ENCODE measurements at regions of chr5 and their contacts with region 1.

Region 1: DNA sequence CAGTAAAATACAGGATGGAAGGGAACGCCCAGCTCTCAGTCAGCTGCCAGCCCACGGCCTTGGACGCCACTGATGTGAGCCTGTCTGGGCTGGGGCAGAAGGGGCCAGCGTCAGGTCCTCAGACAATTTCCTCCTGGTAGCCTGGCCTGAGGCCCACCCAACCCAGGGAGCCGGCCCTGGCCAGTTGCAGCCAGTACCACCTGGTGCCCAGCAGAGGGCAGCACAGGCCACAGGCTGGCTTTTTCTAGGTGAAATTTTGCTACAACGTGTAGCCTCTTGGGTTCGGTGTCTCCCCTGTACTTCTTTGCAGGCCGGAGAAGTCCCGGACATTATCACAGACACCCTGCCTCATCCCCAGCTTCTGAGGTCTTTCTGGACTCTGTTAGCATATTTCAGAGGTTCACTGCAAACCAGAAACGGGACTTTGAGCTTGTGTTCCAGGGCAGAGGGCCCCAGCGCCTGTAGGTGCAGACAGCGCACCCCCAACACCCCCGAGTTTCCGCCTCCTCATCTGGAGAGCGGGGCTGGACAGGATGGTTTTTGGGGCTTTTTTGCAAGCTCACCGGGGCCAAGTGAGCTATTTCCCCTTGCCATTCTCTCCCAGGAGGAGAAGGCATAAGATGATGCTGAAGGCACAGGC is 45.9 kb upstream of the KCNMB1 start:
- DNase-seq: peak; percentile 55 to 85 (median 68)
- H3K4me3 ChIP-seq: no peak overlapping the region
- H3K27ac ChIP-seq: no peak overlapping the region
- H3K27me3 ChIP-seq: peaks cover 0 to 5% (median 0%) of the 10 kb centered on the region in 45 donors
- CTCF ChIP-seq: peak; percentile 86 to 100 (median 99)

Region 2: DNA sequence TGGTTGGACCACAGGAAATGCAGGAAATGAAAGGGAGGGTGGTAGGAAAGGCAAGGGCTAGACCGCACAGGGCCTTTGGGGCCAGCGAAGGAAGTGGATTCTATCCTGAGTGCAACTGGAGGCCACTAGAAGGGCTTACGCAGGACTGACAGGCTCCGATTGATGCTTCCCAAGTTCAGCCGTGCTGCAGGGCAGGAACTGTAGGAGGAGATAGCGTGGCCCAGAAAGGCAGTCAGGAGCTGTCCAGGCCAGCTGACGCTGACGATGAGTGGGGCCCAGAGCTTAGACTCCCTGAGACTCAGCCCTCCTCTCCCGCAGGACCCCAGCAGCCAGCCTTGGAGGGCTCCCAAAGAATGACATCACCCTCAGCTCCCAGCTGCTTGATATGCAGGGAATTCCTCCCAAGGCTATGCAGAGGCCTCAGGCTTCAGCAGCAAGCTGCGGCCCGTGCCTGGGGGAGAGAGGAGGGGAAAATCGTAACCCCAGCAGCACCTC is 117.6 kb after region 1 on chr5:
- intact Hi-C with region 1: loop called in 1 of 2 experiments (anchors 5 kb)
- DNase-seq: peak; percentile 28 to 84 (median 74)
- H3K4me3 ChIP-seq: peak overlapping the region in 13 of 59 donors; percentile 2 to 35 (median 19)
- H3K27ac ChIP-seq: peak overlapping the region in 57 of 59 donors; percentile 1 to 91 (median 74)
- H3K27me3 ChIP-seq: no peaks in the 10 kb centered on the region
- CTCF ChIP-seq: peak in 2 of 56 donors; percentile 16 to 19

Region 3: GRCh38 chr5:170623576-170624181 is 188.6 kb after region 1 on chr5:
- intact Hi-C with region 1: loop called in 1 of 2 experiments (anchors 1 kb)
- DNase-seq: peak in 7 of 10 donors; percentile 31 to 66 (median 47)
- H3K4me3 ChIP-seq: no peak overlapping the region
- H3K27ac ChIP-seq: no peak overlapping the region
- H3K27me3 ChIP-seq: no peaks in the 10 kb centered on the region
- CTCF ChIP-seq: peak in 53 of 56 donors; percentile 43 to 78 (median 65)

Region 4: DNA sequence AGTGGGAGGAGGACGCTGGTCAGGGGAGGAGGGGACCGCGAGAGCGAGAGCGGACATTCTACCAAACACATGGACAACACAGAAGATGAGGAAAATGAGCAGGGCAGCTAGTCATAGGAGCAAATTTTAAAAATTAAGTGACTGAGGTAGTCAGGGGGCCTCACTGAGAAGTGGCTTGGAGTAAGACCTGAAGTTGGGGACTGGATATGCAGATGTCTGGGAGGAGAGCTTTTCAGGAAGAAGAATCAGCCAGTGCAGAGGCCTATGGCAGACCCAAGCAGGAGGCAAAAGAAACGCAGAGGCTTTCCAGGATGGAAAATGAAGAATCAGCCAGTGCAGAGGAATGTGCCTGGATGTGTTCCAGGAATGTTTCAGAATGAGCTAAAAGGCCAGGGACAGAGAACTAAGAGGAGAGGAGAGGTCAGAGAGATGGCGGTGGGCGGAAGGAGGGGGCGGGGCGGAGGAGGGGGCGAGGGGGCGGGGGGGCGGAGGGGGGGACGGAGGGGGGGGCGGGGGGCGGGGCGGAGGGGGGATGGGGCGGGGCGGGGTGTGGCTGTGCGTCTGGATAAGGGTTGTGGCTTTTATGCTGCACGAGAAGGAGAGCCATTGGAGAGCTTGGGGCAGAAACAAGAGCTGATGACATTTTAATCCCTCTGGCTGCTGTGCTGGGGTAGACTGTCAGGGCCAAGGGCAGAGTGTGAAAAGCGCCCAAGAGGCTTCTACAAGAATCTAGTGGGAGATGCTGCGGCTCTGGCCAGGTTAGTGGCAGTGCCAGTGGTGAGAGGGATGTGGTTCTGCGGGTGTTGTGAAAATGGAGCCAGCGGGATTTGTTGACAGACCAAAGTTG is 198.4 kb after region 1 on chr5:
- intact Hi-C with region 1: loop called (anchors 1 to 2 kb)
- DNase-seq: peak in 1 of 10 donors; percentile 26
- H3K4me3 ChIP-seq: peak overlapping the region in 54 of 59 donors; percentile 0 to 59 (median 36)
- H3K27ac ChIP-seq: peak overlapping the region in 42 of 59 donors; percentile 5 to 81 (median 51)
- H3K27me3 ChIP-seq: peaks cover 0 to 4% (median 0%) of the 10 kb centered on the region in 45 donors
- CTCF ChIP-seq: peak in 29 of 56 donors; percentile 1 to 99 (median 23)

Region 5: GRCh38 chr5:170791325-170791954 is 356.4 kb after region 1 on chr5:
- intact Hi-C with region 1: loop called in 1 of 2 experiments (anchors 5 kb)
- DNase-seq: peak in 7 of 10 donors; percentile 28 to 80 (median 64)
- H3K4me3 ChIP-seq: no peak overlapping the region
- H3K27ac ChIP-seq: no peak overlapping the region
- H3K27me3 ChIP-seq: peaks cover 0 to under 1% (median 0%) of the 10 kb centered on the region in 45 donors
- CTCF ChIP-seq: peak; percentile 23 to 81 (median 62)